WTC11 (cell line): ENCODE measurements at regions of chr2 and their contacts with region 1.

Region 1: DNA sequence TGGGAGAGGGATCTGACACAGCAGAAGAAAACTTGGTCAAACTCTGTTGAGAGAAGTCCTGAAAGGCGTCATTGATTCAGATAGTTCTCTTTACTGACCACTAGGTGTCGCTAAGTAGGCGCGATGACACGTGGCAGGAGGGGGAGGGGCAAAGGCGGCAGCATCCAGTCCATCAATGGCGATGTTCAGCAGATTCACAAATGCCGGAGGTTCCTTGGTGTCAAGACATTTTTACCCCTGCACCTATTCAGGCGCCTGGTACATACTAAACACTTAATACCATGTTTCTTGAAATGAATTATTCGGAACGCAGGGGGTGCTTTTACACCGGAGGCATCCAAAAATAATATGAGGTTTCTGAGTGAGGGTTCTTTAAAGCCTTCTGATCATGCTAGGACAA is 3.0 kb upstream of the PLEK start:
- DNase-seq: peak; percentile 65
- ATAC-seq: peak; percentile 54
- H3K4me3 Mint-ChIP-seq: no peak overlapping the region
- H3K27ac Mint-ChIP-seq: no peak overlapping the region
- H3K4me1 Mint-ChIP-seq: peaks cover 13% of the 10 kb centered on the region
- H3K27me3 Mint-ChIP-seq: peaks cover 29% of the 10 kb centered on the region
- CTCF ChIP-seq: peak; percentile 79

Region 2: GRCh38 chr2:68319398-68320117 is 42.5 kb before region 1 on chr2 and contains the start of gene CNRIP1:
- CTCF ChIA-PET with region 1: interaction called, 14 read pairs
- POLR2A ChIA-PET with region 1: no interaction called
- DNase-seq: peak; percentile 64
- ATAC-seq: peak; percentile 72
- H3K4me3 Mint-ChIP-seq: peak within 1 kb of the TSS; percentile 78
- H3K27ac Mint-ChIP-seq: no peak within 1 kb of the TSS
- H3K4me1 Mint-ChIP-seq: peaks cover 12% of the 10 kb centered on the region
- H3K27me3 Mint-ChIP-seq: peaks cover 68% of the 10 kb centered on the region
- CTCF ChIP-seq: no peak
- total RNA-seq, gene CNRIP1: 1.3 to 1.6 TPM (median 1.4 TPM) in 3 replicates

Region 3: DNA sequence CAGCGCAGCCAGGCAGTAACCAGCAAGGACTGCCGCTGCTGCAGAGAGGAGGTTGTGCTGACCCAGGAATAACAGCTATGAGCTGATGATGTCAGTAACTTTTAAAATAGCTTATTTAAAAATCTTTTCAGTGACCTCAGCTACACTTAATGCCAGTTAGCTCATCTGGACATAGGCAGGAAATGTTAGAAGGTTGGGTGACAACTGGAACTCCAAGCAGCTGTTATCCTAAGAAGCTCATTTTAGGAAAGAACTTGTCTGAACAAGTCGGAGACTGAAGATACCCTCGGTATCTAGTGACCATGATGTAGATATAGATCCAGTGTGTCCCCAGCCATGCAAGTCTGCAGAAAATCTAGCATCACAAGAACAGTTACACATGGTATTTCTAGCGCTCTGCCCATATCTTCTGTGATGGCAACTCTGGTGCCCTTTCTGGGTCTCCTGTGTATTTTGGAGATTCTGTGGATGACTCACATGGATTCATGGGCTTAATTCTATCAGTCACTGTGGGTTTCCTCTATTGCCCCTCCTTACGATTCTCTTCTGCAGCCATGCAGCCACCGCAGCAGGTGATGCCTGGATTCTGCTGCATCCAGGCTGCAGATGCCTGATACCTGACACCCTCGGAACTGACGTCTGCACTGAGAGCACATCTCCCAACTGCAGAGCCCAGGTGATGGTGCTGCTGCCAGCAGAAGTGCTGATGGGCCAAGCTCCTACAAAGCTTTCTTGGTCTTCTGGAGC is 16.8 kb before region 1 on chr2:
- CTCF ChIA-PET with region 1: interaction called, 10 read pairs
- POLR2A ChIA-PET with region 1: no interaction called
- DNase-seq: peak; percentile 20
- ATAC-seq: peak; percentile 65
- H3K4me3 Mint-ChIP-seq: no peak overlapping the region
- H3K27ac Mint-ChIP-seq: no peak overlapping the region
- H3K4me1 Mint-ChIP-seq: peaks cover 3% of the 10 kb centered on the region
- H3K27me3 Mint-ChIP-seq: no peaks in the 10 kb centered on the region; the same call in 1 of the 2 replicates
- CTCF ChIP-seq: no peak

Region 4: DNA sequence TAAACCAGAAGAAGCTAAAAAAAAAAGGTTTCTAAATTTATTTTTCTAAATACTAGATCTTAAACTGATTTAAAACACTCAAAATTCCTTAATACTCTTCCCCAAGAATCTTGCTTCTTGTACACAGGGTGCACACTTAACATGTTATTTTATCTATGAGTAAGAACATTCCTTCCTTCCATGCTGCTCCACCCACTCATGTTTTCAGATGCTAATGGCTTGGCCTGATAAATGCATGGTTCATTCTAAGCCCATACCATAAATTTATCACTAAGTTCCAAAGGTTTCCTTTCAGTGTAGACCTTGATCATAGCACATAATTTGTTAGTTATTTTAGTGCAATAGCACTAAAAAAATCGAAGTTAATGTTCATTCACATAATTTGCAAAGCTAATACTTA is 96.9 kb after region 1 on chr2:
- CTCF ChIA-PET with region 1: no interaction called
- POLR2A ChIA-PET with region 1: no interaction called
- DNase-seq: no peak
- ATAC-seq: no peak
- H3K4me3 Mint-ChIP-seq: no peak overlapping the region
- H3K27ac Mint-ChIP-seq: no peak overlapping the region
- H3K4me1 Mint-ChIP-seq: no peaks in the 10 kb centered on the region
- H3K27me3 Mint-ChIP-seq: no peaks in the 10 kb centered on the region
- CTCF ChIP-seq: no peak

Region 5: DNA sequence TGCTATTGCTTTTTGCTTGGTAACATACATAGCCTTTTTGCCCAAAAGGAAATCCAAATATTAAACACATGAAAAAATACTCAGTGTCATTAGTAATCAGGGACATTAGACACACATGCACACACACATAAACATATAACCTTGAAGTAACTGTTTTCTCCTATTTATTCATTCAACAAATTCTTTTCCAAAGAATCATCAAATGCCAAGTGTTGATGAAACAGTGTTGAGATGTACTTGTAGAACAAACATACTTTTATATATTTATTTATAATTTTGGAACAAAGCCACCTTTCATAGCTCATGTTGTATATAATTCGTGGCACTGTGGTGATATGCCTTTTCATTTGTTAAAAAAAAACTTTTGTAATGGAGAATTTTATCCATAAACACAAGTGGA is 186.3 kb after region 1 on chr2:
- CTCF ChIA-PET with region 1: no interaction called
- POLR2A ChIA-PET with region 1: no interaction called
- DNase-seq: no peak
- ATAC-seq: no peak
- H3K4me3 Mint-ChIP-seq: no peak overlapping the region
- H3K27ac Mint-ChIP-seq: no peak overlapping the region
- H3K4me1 Mint-ChIP-seq: peaks cover 8% of the 10 kb centered on the region; the same call in 1 of the 2 replicates
- H3K27me3 Mint-ChIP-seq: no peaks in the 10 kb centered on the region
- CTCF ChIP-seq: no peak